A673 (cell line): ENCODE measurements at regions of chr1 and their contacts with region 1.

Region 1: DNA sequence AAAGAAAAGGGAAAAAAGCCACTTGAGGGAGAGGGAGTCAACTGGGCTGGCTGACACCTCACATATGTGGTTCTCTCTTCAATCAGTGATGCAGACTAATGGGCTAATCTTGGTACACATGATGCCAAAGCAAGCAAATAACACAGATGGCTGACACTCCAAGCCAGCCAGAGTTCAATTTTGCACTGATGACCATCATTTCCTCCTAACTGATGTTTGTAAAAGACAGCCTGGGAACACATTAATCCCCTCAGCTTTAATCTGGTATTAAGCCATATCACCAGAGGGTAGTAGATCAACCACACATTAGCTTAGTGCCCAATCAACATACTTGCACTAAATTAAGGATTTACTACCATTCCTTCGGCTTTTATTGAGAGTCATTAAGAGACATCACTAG is 2.8 kb downstream of the VPS72 start:
- DNase-seq: no peak
- H3K4me3 ChIP-seq: no peak overlapping the region
- H3K27ac ChIP-seq: no peak overlapping the region
- H3K4me1 ChIP-seq: peaks cover 5% of the 10 kb centered on the region
- H3K27me3 ChIP-seq: no peaks in the 10 kb centered on the region
- CTCF ChIP-seq: no peak

Region 2: DNA sequence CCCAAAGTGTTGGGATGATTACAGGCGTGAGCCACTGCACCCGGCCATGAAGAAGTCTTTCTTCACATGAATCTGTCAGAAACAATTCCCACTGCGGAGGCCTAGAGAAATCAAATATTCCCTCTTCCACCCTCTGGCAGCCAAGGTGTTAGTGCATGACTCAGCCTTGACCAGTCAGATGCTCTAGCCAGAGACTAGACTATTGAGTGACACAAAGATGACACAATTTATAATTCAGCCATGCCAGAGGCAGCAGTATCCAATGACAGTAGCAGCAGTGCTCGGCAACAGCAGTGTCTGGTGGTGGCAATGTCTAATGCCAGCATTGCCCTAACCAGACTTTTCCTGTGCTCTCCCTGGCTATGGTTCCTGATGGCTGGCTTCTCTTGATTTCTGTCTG is 291.6 kb before region 1 on chr1:
- CTCF ChIA-PET with region 1: no interaction called
- POLR2A ChIA-PET with region 1: no interaction called
- intact Hi-C with region 1: no loop called
- DNase-seq: no peak
- H3K4me3 ChIP-seq: no peak overlapping the region
- H3K27ac ChIP-seq: no peak overlapping the region
- H3K4me1 ChIP-seq: no peaks in the 10 kb centered on the region
- H3K27me3 ChIP-seq: no peaks in the 10 kb centered on the region
- CTCF ChIP-seq: no peak

Region 3: GRCh38 chr1:151104630-151105029 is 82.6 kb before region 1 on chr1:
- CTCF ChIA-PET with region 1: interaction called, 12 read pairs
- POLR2A ChIA-PET with region 1: no interaction called
- intact Hi-C with region 1: no loop called
- DNase-seq: no peak
- H3K4me3 ChIP-seq: no peak overlapping the region
- H3K27ac ChIP-seq: no peak overlapping the region
- H3K4me1 ChIP-seq: no peaks in the 10 kb centered on the region
- H3K27me3 ChIP-seq: no peaks in the 10 kb centered on the region
- CTCF ChIP-seq: no peak